ENCODE measurements at regions of chr9 and their contacts with region 1.

Region 1: GRCh38 chr9:128723866-128724743 is at the start of gene ZDHHC12:
- DNase-seq: peak; percentile 92
- ATAC-seq: peak; percentile 99
- H3K4me3 ChIP-seq: peak within 1 kb of the TSS; percentile 100
- H3K27ac ChIP-seq: peak within 1 kb of the TSS; percentile 63
- H3K4me1 ChIP-seq: peaks cover 5% of the 10 kb centered on the region
- H3K27me3 ChIP-seq: no peaks in the 10 kb centered on the region
- CTCF ChIP-seq: no peak
- EP300 ChIP-seq: no peak
- POLR2A ChIP-seq: peak; percentile 99
- RAD21 ChIP-seq: no peak
- polyA plus RNA-seq, gene ZDHHC12: 0.95 to 9.9 TPM

Region 2: DNA sequence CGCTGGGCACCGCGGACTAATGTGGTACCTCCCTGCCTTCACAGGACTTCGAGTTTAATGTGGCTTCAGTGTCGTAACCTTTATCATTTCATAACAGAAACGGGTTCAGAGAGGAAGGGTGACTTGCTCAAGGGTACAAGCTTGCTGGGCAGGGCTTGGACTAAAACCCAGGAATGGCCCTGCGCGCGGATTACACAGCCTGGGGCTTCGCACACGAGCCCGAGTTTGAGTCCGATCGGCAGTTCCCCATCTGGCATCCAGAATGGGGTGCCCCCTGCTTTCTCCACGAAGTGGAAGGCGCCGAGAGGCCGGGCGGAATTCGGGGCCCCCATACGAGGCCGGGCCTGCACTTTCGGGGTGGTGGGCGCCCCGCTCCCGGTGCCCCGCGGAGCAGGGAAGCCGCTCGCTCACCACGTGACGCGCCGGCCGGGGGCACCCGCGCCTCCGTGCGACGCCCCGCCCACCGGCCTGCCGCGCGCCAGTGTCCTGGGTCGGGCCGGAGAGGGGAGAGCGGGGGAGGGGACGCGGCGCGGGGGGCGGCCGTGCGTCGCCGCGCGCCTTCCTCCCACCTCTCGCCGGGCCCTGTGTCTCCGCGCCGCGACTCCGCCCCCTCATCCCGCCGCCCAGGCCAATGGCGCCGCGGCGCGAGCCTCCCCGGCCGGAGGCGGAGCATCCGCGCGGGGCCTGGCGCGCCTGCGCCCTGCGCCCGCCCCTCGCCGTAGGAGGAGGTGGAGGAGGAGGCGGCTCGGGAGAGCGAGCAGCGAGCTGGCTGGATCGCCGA is 35.4 kb before region 1 on chr9 and contains the start of gene SET:
- CTCF ChIA-PET with region 1: interaction called, 4 read pairs
- POLR2A ChIA-PET with region 1: interaction called, 14 read pairs
- RAD21 ChIA-PET with region 1: interaction called, 5 read pairs
- SMC1A ChIA-PET with region 1: no interaction called
- in situ Hi-C with region 1: no loop called
- intact Hi-C with region 1: no loop called
- DNase-seq: peak; percentile 73
- ATAC-seq: peak; percentile 76
- H3K4me3 ChIP-seq: peak within 1 kb of the TSS; percentile 100
- H3K27ac ChIP-seq: peak within 1 kb of the TSS; percentile 81
- H3K4me1 ChIP-seq: peaks cover 13% of the 10 kb centered on the region; the same call in 1 of the 2 replicates
- H3K27me3 ChIP-seq: no peaks in the 10 kb centered on the region
- CTCF ChIP-seq: no peak
- EP300 ChIP-seq: no peak
- POLR2A ChIP-seq: peak; percentile 90
- RAD21 ChIP-seq: no peak
- polyA plus RNA-seq, gene SET: 314 to 450 TPM

Region 3: DNA sequence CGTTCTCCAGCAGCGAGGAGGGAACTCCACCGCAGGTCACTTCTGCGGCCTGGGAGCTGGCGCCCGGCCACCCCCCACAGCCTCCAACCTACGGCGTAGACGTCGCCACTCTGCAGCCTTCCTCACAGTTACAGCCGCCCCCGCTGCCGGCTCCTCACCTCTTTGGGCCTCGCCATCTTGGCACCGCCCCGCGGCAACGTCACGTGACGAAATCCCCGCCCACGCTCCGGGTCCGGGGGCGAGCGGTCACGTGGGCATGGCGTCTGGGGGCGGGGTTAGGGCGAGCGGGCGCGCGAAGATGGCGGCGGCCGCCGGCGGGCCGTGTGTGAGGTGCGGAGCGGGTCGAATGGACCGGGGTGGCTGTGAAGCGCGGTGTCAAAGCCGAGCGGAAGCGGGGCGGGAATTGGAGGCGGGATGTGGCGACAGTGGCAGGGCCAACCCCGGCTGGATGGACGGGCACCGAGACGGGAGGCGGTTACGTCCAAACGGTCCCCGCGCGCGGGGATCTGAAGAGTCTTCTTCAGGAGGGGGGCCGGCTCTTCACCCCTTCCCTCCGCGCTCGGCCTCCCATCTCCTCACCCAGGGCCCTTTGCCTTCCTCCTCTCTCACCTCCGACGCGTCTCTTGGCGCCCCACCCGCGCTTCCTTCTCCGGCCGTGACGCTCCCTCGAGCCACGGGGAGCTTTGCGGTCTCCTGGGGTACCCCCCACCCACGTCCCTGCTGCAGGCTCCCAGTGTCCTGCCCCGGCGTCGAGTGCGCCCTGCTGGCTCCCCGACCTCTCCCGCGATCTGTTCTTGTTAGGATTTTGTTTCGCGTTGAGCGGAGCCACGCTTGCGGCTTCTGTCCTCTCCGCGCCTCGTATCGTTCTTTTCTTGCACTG is 223.6 kb after region 1 on chr9 and contains the starts of genes DOLK and NUP188:
- CTCF ChIA-PET with region 1: no interaction called
- POLR2A ChIA-PET with region 1: no interaction called
- RAD21 ChIA-PET with region 1: no interaction called
- SMC1A ChIA-PET with region 1: no interaction called
- in situ Hi-C with region 1: no loop called
- intact Hi-C with region 1: loop called (anchors 5 kb)
- DNase-seq: peak; percentile 60
- ATAC-seq: peak; percentile 89
- H3K4me3 ChIP-seq: peak within 1 kb of the TSS; percentile 99
- H3K27ac ChIP-seq: peak within 1 kb of the TSS; percentile 84
- H3K4me1 ChIP-seq: peaks cover 11% of the 10 kb centered on the region
- H3K27me3 ChIP-seq: no peaks in the 10 kb centered on the region
- CTCF ChIP-seq: peak in 1 of 3 experiments; percentile 8; a peak in 1 of 6 replicates
- EP300 ChIP-seq: no peak
- POLR2A ChIP-seq: peak; percentile 99
- RAD21 ChIP-seq: no peak
- polyA plus RNA-seq, gene DOLK: 1.9 to 3.2 TPM
- polyA plus RNA-seq, gene NUP188: 1.4 to 3.5 TPM

Measured in GM12878 (cell line).